Activated B cell treated with CpG ODN at 0.5 μM for 24 hours (primary cell): ENCODE measurements at regions of chr1 and their contacts with region 1.

Region 1: DNA sequence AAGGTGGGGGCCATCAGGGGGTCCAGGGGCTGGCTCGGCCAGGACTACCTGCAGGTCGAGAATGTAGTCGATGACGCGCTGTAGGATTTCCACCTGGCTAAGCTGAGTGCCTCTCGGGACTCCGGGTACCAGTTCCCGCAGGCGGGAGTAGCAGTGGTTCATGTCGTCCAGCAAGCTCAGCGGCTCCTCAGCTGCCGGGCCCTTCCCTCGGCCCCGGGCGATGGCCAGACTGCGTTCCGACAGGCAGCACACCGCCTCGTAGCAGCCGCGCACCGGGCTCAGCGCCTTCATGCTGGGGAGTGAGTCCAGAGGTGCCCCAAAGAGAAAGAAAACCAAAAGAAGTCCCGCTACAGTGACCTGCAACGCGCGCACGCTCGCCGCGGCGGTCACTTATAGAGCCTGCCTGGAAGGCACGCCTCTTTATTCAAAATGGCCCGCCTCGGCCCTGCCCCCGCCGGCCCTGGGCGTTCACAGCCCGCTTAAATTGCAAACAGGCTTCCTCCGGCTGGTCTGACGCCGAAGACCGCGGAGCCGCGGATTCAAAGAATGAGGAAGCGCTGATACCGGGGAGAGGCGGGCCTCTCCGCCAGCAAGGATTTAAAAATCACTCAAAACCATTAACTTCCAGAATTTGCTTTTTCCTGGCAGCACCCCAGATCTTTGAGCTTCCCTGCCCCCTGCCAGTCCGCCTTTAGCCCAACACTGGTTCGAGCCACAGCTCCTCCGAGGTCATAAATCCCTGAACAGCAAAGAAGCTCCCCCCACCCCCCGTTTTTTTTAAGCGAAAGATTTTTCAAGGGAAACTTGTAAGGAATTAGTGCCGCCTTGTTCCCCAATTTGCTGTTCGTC is at the start of gene ID3:
- DNase-seq: peak; percentile 90
- ATAC-seq: peak; percentile 75
- H3K4me3 Mint-ChIP-seq: peak within 1 kb of the TSS; percentile 87
- H3K27ac Mint-ChIP-seq: peak within 1 kb of the TSS; percentile 95
- H3K4me1 Mint-ChIP-seq: peaks cover 80% of the 10 kb centered on the region
- H3K27me3 Mint-ChIP-seq: no peaks in the 10 kb centered on the region
- CTCF ChIP-seq: no peak
- total RNA-seq, gene ID3: 195 and 205 TPM in 2 replicates

Region 2: GRCh38 chr1:23539698-23540266 is 19.6 kb before region 1 on chr1:
- CTCF ChIA-PET with region 1: interaction called, 10 read pairs
- POLR2A ChIA-PET with region 1: interaction called, 40 read pairs
- intact Hi-C with region 1: loop called (anchors 2 kb)
- DNase-seq: peak; percentile 84
- ATAC-seq: peak; percentile 92
- H3K4me3 Mint-ChIP-seq: peak overlapping the region; percentile 59
- H3K27ac Mint-ChIP-seq: peak overlapping the region; percentile 56
- H3K4me1 Mint-ChIP-seq: peaks cover 39% of the 10 kb centered on the region
- H3K27me3 Mint-ChIP-seq: no peaks in the 10 kb centered on the region
- CTCF ChIP-seq: peak; percentile 60

Region 3: GRCh38 chr1:23577056-23578004 is 18.0 kb after region 1 on chr1:
- CTCF ChIA-PET with region 1: interaction called, 20 read pairs
- POLR2A ChIA-PET with region 1: interaction called, 520 read pairs
- intact Hi-C with region 1: loop called (anchors 1 kb)
- DNase-seq: no peak
- ATAC-seq: peak; percentile 75
- H3K4me3 Mint-ChIP-seq: peak overlapping the region; percentile 74
- H3K27ac Mint-ChIP-seq: peak overlapping the region; percentile 87
- H3K4me1 Mint-ChIP-seq: peaks cover 86% of the 10 kb centered on the region
- H3K27me3 Mint-ChIP-seq: no peaks in the 10 kb centered on the region
- CTCF ChIP-seq: no peak

Region 4: GRCh38 chr1:23591460-23592208 is 32.3 kb after region 1 on chr1:
- CTCF ChIA-PET with region 1: interaction called, 21 read pairs
- POLR2A ChIA-PET with region 1: interaction called, 1,151 read pairs
- intact Hi-C with region 1: loop called (anchors 1 kb)
- DNase-seq: peak; percentile 67
- ATAC-seq: peak; percentile 80
- H3K4me3 Mint-ChIP-seq: peak overlapping the region; percentile 74
- H3K27ac Mint-ChIP-seq: peak overlapping the region; percentile 89
- H3K4me1 Mint-ChIP-seq: peaks cover 87% of the 10 kb centered on the region
- H3K27me3 Mint-ChIP-seq: no peaks in the 10 kb centered on the region
- CTCF ChIP-seq: no peak

Region 5: GRCh38 chr1:23619299-23620188 is 60.2 kb after region 1 on chr1:
- CTCF ChIA-PET with region 1: interaction called, 11 read pairs
- POLR2A ChIA-PET with region 1: interaction called, 441 read pairs
- intact Hi-C with region 1: loop called (anchors 1 kb)
- DNase-seq: peak; percentile 75
- ATAC-seq: peak; percentile 81
- H3K4me3 Mint-ChIP-seq: peak overlapping the region; percentile 81
- H3K27ac Mint-ChIP-seq: peak overlapping the region; percentile 91
- H3K4me1 Mint-ChIP-seq: peaks cover 92% of the 10 kb centered on the region
- H3K27me3 Mint-ChIP-seq: no peaks in the 10 kb centered on the region
- CTCF ChIP-seq: no peak